ENCODE measurements at regions of chr14 and their contacts with region 1.

Region 1: DNA sequence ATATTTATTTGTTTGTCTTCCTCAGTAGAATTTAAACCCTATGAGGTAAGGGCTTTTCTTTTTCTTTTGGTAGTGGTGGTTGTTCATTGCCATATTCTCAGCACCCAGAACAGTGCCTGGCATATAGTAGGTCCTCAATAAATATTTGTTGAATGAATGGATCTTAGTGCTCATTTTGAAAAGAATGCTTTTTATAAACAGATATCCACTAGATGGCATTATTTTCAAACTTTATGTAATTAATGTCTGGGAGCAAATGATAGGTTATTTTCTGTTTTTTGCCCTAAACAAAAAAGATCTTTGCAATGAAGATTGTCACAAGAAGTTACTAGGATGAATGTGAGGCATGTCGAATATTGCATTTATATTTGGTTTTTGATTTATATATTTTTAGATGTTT is 64.1 kb downstream of the RAD51B start:
- DNase-seq: peak; percentile 28
- ATAC-seq: no peak
- H3K4me3 ChIP-seq: no peak overlapping the region
- H3K27ac ChIP-seq: no peak overlapping the region
- H3K4me1 ChIP-seq: no peaks in the 10 kb centered on the region
- H3K27me3 ChIP-seq: no peaks in the 10 kb centered on the region
- CTCF ChIP-seq: peak; percentile 53
- POLR2A ChIP-seq: no peak
- RAD21 ChIP-seq: peak; percentile 51

Region 2: DNA sequence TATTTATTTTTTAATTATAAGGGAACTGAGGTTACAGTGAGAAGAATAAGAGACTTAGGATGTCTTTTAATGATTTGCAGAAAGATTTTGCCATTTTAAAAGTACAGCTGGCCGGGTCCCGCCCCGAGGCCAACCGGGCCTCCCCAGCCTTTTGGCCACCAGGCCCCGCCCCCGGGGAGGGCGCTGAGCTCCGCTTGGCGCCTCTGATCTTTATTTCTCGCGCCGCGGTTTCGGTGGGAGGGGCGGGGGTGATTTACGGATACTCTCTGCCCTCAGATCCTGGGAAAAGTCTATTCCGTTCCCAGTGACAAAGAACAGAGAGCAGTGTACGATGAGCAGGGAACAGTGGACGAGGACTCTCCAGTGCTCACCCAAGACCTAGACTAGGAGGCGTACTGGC is 85.0 kb before region 1 on chr14:
- CTCF ChIA-PET with region 1: no interaction called
- POLR2A ChIA-PET with region 1: no interaction called
- dilution Hi-C with region 1: no loop called
- in situ Hi-C with region 1: no loop called
- intact Hi-C with region 1: no loop called
- DNase-seq: no peak
- ATAC-seq: no peak
- H3K4me3 ChIP-seq: no peak overlapping the region
- H3K27ac ChIP-seq: no peak overlapping the region
- H3K4me1 ChIP-seq: no peaks in the 10 kb centered on the region
- H3K27me3 ChIP-seq: no peaks in the 10 kb centered on the region
- CTCF ChIP-seq: no peak
- POLR2A ChIP-seq: no peak
- RAD21 ChIP-seq: no peak

Region 3: DNA sequence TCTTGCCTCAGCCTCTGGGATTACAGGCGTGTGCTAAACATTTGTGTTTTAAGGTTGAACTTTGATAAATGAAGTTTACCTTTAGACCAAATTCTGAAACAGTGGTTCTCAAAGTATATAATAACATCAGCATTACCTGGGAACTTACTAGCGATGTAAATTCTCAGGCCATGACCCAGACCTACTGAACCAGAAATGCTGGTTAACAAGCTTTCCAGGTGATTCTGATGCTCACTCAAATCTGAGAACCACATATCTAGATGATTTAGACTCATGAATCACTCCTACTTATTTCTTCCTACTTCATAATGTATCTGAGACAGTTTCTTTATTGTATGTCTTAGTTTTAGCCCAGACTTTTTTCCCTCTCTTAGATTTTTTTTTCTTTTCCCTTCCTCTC is 20.5 kb before region 1 on chr14:
- CTCF ChIA-PET with region 1: no interaction called
- POLR2A ChIA-PET with region 1: no interaction called
- dilution Hi-C with region 1: no loop called
- in situ Hi-C with region 1: no loop called
- intact Hi-C with region 1: loop called (anchors 1 kb)
- DNase-seq: no peak
- ATAC-seq: no peak
- H3K4me3 ChIP-seq: no peak overlapping the region
- H3K27ac ChIP-seq: no peak overlapping the region
- H3K4me1 ChIP-seq: no peaks in the 10 kb centered on the region
- H3K27me3 ChIP-seq: no peaks in the 10 kb centered on the region
- CTCF ChIP-seq: no peak
- POLR2A ChIP-seq: no peak
- RAD21 ChIP-seq: no peak

Region 4: GRCh38 chr14:68843471-68844209 is 959.9 kb after region 1 on chr14:
- CTCF ChIA-PET with region 1: interaction called, 3 read pairs
- POLR2A ChIA-PET with region 1: no interaction called
- dilution Hi-C with region 1: no loop called
- in situ Hi-C with region 1: no loop called
- intact Hi-C with region 1: loop called (anchors 5 kb)
- DNase-seq: peak; percentile 57
- ATAC-seq: peak; percentile 77
- H3K4me3 ChIP-seq: no peak overlapping the region
- H3K27ac ChIP-seq: no peak overlapping the region
- H3K4me1 ChIP-seq: peaks cover 15% of the 10 kb centered on the region; the same call in 1 of the 2 replicates
- H3K27me3 ChIP-seq: no peaks in the 10 kb centered on the region
- CTCF ChIP-seq: peak; percentile 81
- POLR2A ChIP-seq: 0 out of 2 replicates have a peak, but pooled peaks have one; percentile 47
- RAD21 ChIP-seq: peak; percentile 66

Region 5: GRCh38 chr14:68896132-68896531 is 1012.4 kb after region 1 on chr14:
- CTCF ChIA-PET with region 1: no interaction called
- POLR2A ChIA-PET with region 1: no interaction called
- dilution Hi-C with region 1: no loop called
- in situ Hi-C with region 1: no loop called
- intact Hi-C with region 1: no loop called
- DNase-seq: no peak
- ATAC-seq: no peak
- H3K4me3 ChIP-seq: no peak overlapping the region
- H3K27ac ChIP-seq: no peak overlapping the region
- H3K4me1 ChIP-seq: peaks cover 20% of the 10 kb centered on the region
- H3K27me3 ChIP-seq: no peaks in the 10 kb centered on the region
- CTCF ChIP-seq: peak; percentile 35; the same call in 1 of the 2 replicates
- POLR2A ChIP-seq: 0 out of 2 replicates have a peak, but pooled peaks have one; percentile 18
- RAD21 ChIP-seq: no peak

Region 6: GRCh38 chr14:69107407-69108003 is 1223.8 kb after region 1 on chr14:
- CTCF ChIA-PET with region 1: no interaction called
- POLR2A ChIA-PET with region 1: no interaction called
- dilution Hi-C with region 1: no loop called
- in situ Hi-C with region 1: loop called (anchors 25 kb)
- intact Hi-C with region 1: no loop called
- DNase-seq: peak; percentile 71
- ATAC-seq: peak; percentile 67
- H3K4me3 ChIP-seq: no peak overlapping the region
- H3K27ac ChIP-seq: no peak overlapping the region
- H3K4me1 ChIP-seq: 0 out of 2 replicates have a peak, but pooled peaks cover 2% of the 10 kb centered on the region
- H3K27me3 ChIP-seq: no peaks in the 10 kb centered on the region
- CTCF ChIP-seq: peak; percentile 84
- POLR2A ChIP-seq: no peak
- RAD21 ChIP-seq: peak; percentile 94